Activated CD4-positive, alpha-beta T cell treated with anti-CD3 and anti-CD28 coated beads for 36 hours (primary cell): ENCODE measurements at regions of chr3 and their contacts with region 1.

Region 1: DNA sequence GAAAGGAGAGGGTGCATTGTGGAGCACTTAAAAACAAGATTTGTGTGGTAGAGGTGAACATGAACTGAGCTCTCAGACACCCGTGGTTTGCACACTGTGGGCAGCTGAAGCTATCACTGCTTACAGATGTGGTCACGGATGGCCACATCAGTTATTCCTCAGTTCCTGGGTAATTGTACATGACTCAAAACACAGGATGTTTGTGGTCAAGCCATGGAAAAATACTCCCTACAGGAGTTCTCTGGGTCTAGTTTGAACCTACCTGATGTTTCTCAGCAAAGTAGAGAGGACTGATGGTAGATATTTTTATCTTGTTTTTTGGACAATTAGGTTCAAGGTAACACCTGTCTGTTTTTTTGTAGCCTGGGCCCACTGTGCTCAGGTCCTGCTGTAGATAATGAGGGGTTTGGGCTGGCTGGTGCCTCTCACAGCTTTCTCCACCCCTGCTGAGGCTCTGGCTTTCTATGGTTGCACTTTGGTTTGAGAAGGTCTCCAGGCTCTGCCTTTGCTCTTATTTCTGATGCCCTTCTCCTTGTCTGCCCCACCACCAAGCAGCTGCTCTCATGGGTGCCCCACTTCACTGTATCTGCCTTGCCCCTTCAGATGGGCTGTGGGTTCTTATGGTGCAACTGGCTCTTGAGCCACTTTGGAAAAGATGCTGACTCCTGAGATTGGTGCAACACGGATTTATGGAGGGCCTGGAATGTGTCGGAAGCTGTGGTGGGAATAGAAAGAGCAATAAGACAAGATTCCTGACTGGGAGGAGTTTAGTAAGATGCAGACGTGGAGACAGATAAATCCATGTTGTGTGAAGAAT is 40.1 kb downstream of the CDCP1 start:
- DNase-seq: peak; percentile 85
- ATAC-seq: peak; percentile 81
- H3K4me3 Mint-ChIP-seq: peak overlapping the region; percentile 37
- H3K27ac Mint-ChIP-seq: peak overlapping the region; percentile 62
- H3K4me1 Mint-ChIP-seq: peaks cover 81% of the 10 kb centered on the region
- H3K27me3 Mint-ChIP-seq: peaks cover 4% of the 10 kb centered on the region

Region 2: DNA sequence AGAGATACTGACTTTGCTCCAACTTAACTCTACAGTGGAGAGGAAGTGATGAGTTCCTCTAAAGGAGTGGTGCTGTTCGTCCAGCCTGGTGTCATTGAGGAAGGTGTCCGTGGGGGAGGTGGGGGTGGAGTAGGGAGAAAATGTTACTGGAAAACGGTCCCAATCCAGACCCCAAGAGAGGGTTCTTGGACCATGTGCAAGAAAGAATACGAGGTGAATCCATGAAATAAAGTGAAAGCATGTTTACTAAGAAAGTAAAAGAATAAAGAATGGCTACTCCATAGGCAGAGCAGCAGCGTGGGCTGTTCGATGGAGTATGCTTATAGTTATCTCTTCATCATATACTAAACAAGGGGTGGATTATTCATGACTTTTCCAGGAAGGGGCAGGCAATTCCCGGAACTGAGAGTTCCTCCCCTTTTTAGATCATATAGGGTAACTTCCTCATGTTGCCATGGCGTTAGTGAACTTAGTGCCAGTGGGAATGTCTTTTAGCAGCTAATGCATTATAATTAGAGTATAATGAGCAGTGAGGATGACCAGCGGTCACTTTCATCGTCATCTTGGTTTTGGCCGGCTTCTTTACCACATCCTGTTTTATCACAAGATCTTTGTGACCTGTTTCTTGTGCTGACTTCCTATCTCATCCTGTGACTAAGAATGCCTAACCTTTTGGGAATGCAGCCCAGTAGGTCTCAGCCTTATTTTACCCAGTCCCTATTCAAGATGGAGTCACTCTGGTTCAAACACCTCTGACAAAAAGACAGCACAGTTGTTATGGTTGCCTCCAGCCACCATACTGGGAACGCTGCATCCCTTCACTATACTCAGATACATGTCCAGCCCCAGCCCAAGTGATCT is 41.3 kb before region 1 on chr3:
- CTCF ChIA-PET with region 1: no interaction called
- POLR2A ChIA-PET with region 1: no interaction called
- intact Hi-C with region 1: loop called in 1 of 2 experiments (anchors 2 kb)
- DNase-seq: peak; percentile 80
- ATAC-seq: peak; percentile 84
- H3K4me3 Mint-ChIP-seq: peak overlapping the region; percentile 37
- H3K27ac Mint-ChIP-seq: peak overlapping the region; percentile 82
- H3K4me1 Mint-ChIP-seq: peaks cover 30% of the 10 kb centered on the region
- H3K27me3 Mint-ChIP-seq: peaks cover 2% of the 10 kb centered on the region

Region 3: GRCh38 chr3:45210308-45211041 is 104.4 kb after region 1 on chr3:
- CTCF ChIA-PET with region 1: interaction called, 10 read pairs
- POLR2A ChIA-PET with region 1: no interaction called
- intact Hi-C with region 1: loop called in 1 of 2 experiments (anchors 1 kb)
- DNase-seq: peak; percentile 90
- ATAC-seq: peak; percentile 91
- H3K4me3 Mint-ChIP-seq: no peak overlapping the region
- H3K27ac Mint-ChIP-seq: no peak overlapping the region
- H3K4me1 Mint-ChIP-seq: peaks cover 28% of the 10 kb centered on the region
- H3K27me3 Mint-ChIP-seq: peaks cover 10% of the 10 kb centered on the region

Region 4: GRCh38 chr3:45367453-45367871 is 261.4 kb after region 1 on chr3:
- CTCF ChIA-PET with region 1: no interaction called
- POLR2A ChIA-PET with region 1: no interaction called
- intact Hi-C with region 1: no loop called
- DNase-seq: no peak
- ATAC-seq: no peak
- H3K4me3 Mint-ChIP-seq: no peak overlapping the region
- H3K27ac Mint-ChIP-seq: no peak overlapping the region
- H3K4me1 Mint-ChIP-seq: no peaks in the 10 kb centered on the region
- H3K27me3 Mint-ChIP-seq: peaks cover 3% of the 10 kb centered on the region

Region 5: GRCh38 chr3:45665101-45665572 is 559.1 kb after region 1 on chr3:
- CTCF ChIA-PET with region 1: no interaction called
- POLR2A ChIA-PET with region 1: no interaction called
- intact Hi-C with region 1: loop called in 1 of 2 experiments (anchors 5 kb)
- DNase-seq: peak; percentile 76
- ATAC-seq: peak; percentile 23
- H3K4me3 Mint-ChIP-seq: peak overlapping the region; percentile 67
- H3K27ac Mint-ChIP-seq: peak overlapping the region; percentile 68
- H3K4me1 Mint-ChIP-seq: peaks cover 54% of the 10 kb centered on the region
- H3K27me3 Mint-ChIP-seq: no peaks in the 10 kb centered on the region